ENCODE measurements at regions of chr7 and their contacts with region 1.

Region 1: DNA sequence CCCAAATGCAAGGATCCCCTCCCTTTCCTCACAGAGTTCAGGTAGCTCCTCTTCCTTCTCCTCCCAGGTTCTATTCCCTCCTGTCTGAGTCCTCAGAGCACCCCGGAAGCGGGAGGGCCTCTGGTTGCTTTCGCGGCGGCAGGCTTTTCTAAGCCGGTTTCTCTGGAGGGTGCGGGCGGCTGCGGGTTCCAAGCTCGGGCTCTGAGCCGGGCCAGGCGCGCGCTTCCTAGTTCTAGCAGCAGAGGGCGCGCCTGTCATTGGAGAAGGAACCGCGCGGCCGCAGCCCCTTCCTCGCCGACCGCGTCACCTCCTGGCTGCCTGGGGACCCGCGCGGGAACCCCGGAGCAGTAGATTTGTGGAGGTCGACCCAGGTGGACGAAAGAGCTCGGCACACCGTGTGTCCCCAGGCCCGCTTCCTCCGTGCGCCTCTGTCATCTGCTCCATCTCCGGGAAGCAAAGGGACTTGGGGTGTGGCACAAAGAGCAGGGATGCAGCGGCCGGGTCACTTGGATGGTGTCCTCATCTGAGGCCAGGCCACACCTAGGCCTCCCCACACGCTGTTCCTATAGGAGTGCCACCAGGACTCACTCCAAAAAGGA is 389.0 kb upstream of the PODXL start:
- DNase-seq: peak; percentile 44
- ATAC-seq: peak; percentile 70
- H3K4me3 Mint-ChIP-seq: no peak overlapping the region
- H3K27ac Mint-ChIP-seq: no peak overlapping the region
- H3K4me1 Mint-ChIP-seq: no peaks in the 10 kb centered on the region
- H3K27me3 Mint-ChIP-seq: peaks cover 11% of the 10 kb centered on the region

Region 2: DNA sequence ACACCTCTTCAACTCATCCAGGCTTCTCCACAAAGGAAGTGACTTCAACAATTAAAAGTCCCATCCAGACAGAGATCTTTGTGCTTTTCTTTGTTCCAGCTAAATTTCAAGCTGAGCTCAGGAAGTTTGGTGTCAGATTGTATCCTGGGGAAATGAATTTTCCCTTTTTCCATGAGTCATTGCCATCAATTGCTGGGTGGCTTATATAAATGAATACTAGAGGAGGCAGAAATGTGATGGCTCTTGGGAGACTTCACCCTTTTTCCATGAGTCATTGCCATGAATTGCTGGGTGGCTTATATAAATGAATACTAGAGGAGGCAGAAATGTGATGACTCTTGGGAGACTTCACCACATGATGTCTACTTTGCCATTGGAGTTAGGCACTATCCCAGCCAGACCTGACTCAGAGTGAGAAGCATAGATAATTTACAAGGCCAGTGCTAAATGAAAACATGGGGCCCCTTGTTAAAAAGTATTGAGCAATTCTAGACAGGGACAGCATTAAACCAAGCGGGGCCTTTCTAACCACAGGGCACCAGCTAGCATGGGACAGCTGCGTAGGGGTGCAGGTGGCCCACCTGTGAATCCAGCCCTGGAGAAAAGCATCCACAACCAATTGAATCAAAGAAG is 49.8 kb before region 1 on chr7:
- CTCF ChIA-PET with region 1: no interaction called
- DNase-seq: no peak
- ATAC-seq: no peak
- H3K4me3 Mint-ChIP-seq: no peak overlapping the region
- H3K27ac Mint-ChIP-seq: no peak overlapping the region
- H3K4me1 Mint-ChIP-seq: peaks cover 10% of the 10 kb centered on the region
- H3K27me3 Mint-ChIP-seq: peaks cover 7% of the 10 kb centered on the region

Region 3: GRCh38 chr7:131919920-131920709 is 25.3 kb before region 1 on chr7:
- CTCF ChIA-PET with region 1: no interaction called
- DNase-seq: no peak
- ATAC-seq: no peak
- H3K4me3 Mint-ChIP-seq: no peak overlapping the region
- H3K27ac Mint-ChIP-seq: no peak overlapping the region
- H3K4me1 Mint-ChIP-seq: no peaks in the 10 kb centered on the region
- H3K27me3 Mint-ChIP-seq: peaks cover 2% of the 10 kb centered on the region

Region 4: DNA sequence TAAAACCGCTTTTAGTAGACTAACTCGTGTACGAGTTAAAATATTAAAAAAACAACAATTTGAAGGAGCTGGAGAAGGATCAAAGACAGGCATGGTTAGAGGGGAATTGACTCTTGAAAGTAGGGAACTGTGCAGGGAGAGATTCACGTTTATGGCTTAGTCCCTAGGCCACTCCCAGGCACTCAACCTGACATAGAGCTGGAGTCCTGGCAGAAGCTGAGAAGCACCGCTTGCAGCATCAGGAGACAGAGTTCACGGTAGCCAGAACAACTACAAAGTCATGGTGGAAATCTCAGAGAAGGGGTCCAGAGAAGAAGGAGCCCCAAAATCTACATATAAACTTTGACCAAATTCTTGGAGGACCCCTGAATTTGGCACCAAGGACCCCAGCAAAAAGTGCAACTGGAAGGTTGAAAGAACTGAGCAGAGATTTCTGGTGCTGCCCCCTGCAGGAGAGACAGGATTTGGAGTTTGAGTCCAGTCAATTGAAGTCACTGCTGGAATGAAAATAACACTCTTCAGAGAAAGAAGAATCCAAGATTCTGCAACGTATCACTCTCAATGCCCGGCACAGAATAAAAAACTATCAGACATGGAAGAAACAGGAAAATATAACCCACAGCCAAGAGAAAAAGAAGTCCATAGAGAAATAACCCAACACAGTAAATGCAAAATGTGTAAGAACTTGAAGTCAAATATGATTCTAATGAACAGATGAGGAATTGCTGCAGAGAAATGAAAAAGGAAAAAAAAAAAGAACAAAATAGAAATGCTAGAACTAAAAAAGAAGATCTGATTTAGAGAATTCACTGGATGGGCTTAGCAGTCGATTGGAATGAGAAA is 104.3 kb after region 1 on chr7:
- CTCF ChIA-PET with region 1: interaction called, 10 read pairs
- DNase-seq: peak; percentile 52
- ATAC-seq: no peak
- H3K4me3 Mint-ChIP-seq: no peak overlapping the region
- H3K27ac Mint-ChIP-seq: no peak overlapping the region
- H3K4me1 Mint-ChIP-seq: no peaks in the 10 kb centered on the region
- H3K27me3 Mint-ChIP-seq: peaks cover 5% of the 10 kb centered on the region

Measured in activated CD8-positive, alpha-beta memory T cell treated with anti-CD3 and anti-CD28 coated beads, Interleukin-2, amount 10 ng/mL, durations not matched to agents 7 days and 5 days (primary cell).